CD4-positive, alpha-beta T cell (primary cell): ENCODE measurements at regions of chr4 and their contacts with region 1.

Region 1: DNA sequence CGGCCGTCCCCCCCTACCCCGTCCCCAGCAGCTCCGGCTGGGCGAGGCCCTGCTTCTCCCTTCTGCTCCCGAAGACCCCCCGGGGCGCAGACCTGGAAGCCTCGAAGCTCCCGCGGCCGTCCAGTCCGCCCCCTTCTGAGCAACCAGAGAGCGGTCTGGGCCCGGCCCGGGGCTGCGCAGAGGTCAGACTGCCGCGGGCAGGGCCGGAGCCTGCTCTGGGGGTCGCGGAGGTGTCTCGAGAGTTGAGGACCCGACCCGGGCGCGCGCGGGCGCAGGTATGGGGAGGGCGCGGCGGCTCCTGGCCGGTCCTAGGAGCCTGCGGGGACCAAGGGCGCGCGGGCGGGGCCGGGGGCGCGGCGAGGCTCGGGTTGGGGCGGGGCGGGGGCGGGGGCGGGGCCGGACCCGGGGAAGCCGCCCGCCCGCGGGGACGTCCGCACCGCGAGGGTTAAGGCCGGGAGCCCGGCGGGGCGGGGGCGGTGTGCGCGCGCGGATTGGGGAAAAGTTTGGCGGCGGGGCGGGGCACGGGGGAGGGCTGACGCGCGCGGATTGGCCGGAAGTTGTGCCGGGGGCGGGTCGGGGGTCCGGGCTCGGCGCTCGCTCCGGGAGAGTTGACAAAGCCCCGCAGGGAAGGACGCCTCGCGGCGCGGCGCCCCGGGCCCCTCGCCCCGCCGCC is at the start of gene FGFRL1:
- DNase-seq: peak; percentile 84 to 97 (median 93)
- ATAC-seq: peak; percentile 58
- H3K4me3 ChIP-seq: peak within 1 kb of the TSS; percentile 66
- H3K4me3 Mint-ChIP-seq: peak within 1 kb of the TSS; percentile 91
- H3K27ac ChIP-seq: peak within 1 kb of the TSS; percentile 60 to 62
- H3K27ac Mint-ChIP-seq: peak within 1 kb of the TSS; percentile 97
- H3K4me1 ChIP-seq: peaks cover 31% of the 10 kb centered on the region
- H3K4me1 Mint-ChIP-seq: peaks cover 14% of the 10 kb centered on the region
- H3K27me3 ChIP-seq: peaks cover 13 to 19% of the 10 kb centered on the region in 2 experiments
- H3K27me3 Mint-ChIP-seq: peaks cover 37% of the 10 kb centered on the region
- CTCF ChIP-seq: no peak
- total RNA-seq, gene FGFRL1: 21.8 to 25.0 TPM

Region 2: GRCh38 chr4:781493-782216 is 229.5 kb before region 1 on chr4:
- CTCF ChIA-PET with region 1: interaction called, 3 read pairs
- POLR2A ChIA-PET with region 1: no interaction called
- intact Hi-C with region 1: loop called in 1 of 2 experiments (anchors 1 kb)
- DNase-seq: peak; percentile 96 to 99 (median 98)
- ATAC-seq: peak; percentile 91
- H3K4me3 ChIP-seq: peak overlapping the region; percentile 97
- H3K4me3 Mint-ChIP-seq: peak overlapping the region; percentile 97
- H3K27ac ChIP-seq: peak overlapping the region; percentile 80 to 90
- H3K27ac Mint-ChIP-seq: peak overlapping the region; percentile 95
- H3K4me1 ChIP-seq: peaks cover 65% of the 10 kb centered on the region
- H3K4me1 Mint-ChIP-seq: peaks cover 58% of the 10 kb centered on the region
- H3K27me3 ChIP-seq: peaks cover 16 to 32% of the 10 kb centered on the region in 2 experiments
- H3K27me3 Mint-ChIP-seq: peaks cover 23% of the 10 kb centered on the region
- CTCF ChIP-seq: no peak

Region 3: DNA sequence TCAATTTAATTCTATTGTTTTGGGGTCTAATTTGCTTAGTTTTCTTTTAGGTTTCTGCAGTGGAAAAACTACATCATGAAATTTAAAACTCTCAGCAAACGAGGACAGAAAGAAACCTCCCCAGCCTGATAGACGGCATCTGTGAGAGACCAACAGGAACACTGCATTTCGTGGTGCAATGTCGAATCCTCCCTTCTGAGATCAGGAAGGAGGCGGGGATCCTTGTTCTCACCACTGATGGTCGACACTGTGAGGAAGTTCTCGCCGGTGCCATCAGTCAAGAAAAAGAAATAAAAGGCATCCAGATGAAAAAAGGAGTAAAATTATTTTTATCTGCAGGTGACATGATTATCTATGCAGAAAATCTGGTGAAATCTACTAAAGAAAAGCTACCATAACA is 95.6 kb before region 1 on chr4:
- CTCF ChIA-PET with region 1: no interaction called
- POLR2A ChIA-PET with region 1: no interaction called
- intact Hi-C with region 1: no loop called
- DNase-seq: peak in 5 of 14 experiments; percentile 5 to 38 (median 28)
- ATAC-seq: peak; percentile 74
- H3K4me3 ChIP-seq: no peak overlapping the region
- H3K4me3 Mint-ChIP-seq: peak overlapping the region; percentile 69
- H3K27ac ChIP-seq: no peak overlapping the region
- H3K27ac Mint-ChIP-seq: peak overlapping the region; percentile 10
- H3K4me1 ChIP-seq: peaks cover 27% of the 10 kb centered on the region
- H3K4me1 Mint-ChIP-seq: peaks cover 42% of the 10 kb centered on the region
- H3K27me3 ChIP-seq: no peaks in the 10 kb centered on the region
- H3K27me3 Mint-ChIP-seq: no peaks in the 10 kb centered on the region
- CTCF ChIP-seq: no peak

Region 4: GRCh38 chr4:986879-987623 is 24.1 kb before region 1 on chr4 and contains the start of gene IDUA:
- CTCF ChIA-PET with region 1: interaction called, 3 read pairs
- POLR2A ChIA-PET with region 1: interaction called, 4 read pairs
- intact Hi-C with region 1: loop called in 1 of 2 experiments (anchors 2 kb)
- DNase-seq: peak; percentile 73 to 93 (median 86)
- ATAC-seq: peak; percentile 84
- H3K4me3 ChIP-seq: peak within 1 kb of the TSS; percentile 78
- H3K4me3 Mint-ChIP-seq: peak within 1 kb of the TSS; percentile 94
- H3K27ac ChIP-seq: peak within 1 kb of the TSS; percentile 41 to 46
- H3K27ac Mint-ChIP-seq: peak within 1 kb of the TSS; percentile 82
- H3K4me1 ChIP-seq: peaks cover 36% of the 10 kb centered on the region
- H3K4me1 Mint-ChIP-seq: peaks cover 25% of the 10 kb centered on the region
- H3K27me3 ChIP-seq: no peaks in the 10 kb centered on the region
- H3K27me3 Mint-ChIP-seq: no peaks in the 10 kb centered on the region
- CTCF ChIP-seq: peak; percentile 57
- total RNA-seq, gene IDUA: 70.2 to 77.8 TPM

Region 5: GRCh38 chr4:1033840-1034551 is 22.8 kb after region 1 on chr4:
- CTCF ChIA-PET with region 1: no interaction called
- POLR2A ChIA-PET with region 1: no interaction called
- intact Hi-C with region 1: no loop called
- DNase-seq: no peak
- ATAC-seq: no peak
- H3K4me3 ChIP-seq: no peak overlapping the region
- H3K4me3 Mint-ChIP-seq: no peak overlapping the region
- H3K27ac ChIP-seq: no peak overlapping the region
- H3K27ac Mint-ChIP-seq: no peak overlapping the region
- H3K4me1 ChIP-seq: no peaks in the 10 kb centered on the region
- H3K4me1 Mint-ChIP-seq: no peaks in the 10 kb centered on the region
- H3K27me3 ChIP-seq: peaks cover 4 to 6% of the 10 kb centered on the region in 2 experiments
- H3K27me3 Mint-ChIP-seq: no peaks in the 10 kb centered on the region
- CTCF ChIP-seq: no peak

Region 6: DNA sequence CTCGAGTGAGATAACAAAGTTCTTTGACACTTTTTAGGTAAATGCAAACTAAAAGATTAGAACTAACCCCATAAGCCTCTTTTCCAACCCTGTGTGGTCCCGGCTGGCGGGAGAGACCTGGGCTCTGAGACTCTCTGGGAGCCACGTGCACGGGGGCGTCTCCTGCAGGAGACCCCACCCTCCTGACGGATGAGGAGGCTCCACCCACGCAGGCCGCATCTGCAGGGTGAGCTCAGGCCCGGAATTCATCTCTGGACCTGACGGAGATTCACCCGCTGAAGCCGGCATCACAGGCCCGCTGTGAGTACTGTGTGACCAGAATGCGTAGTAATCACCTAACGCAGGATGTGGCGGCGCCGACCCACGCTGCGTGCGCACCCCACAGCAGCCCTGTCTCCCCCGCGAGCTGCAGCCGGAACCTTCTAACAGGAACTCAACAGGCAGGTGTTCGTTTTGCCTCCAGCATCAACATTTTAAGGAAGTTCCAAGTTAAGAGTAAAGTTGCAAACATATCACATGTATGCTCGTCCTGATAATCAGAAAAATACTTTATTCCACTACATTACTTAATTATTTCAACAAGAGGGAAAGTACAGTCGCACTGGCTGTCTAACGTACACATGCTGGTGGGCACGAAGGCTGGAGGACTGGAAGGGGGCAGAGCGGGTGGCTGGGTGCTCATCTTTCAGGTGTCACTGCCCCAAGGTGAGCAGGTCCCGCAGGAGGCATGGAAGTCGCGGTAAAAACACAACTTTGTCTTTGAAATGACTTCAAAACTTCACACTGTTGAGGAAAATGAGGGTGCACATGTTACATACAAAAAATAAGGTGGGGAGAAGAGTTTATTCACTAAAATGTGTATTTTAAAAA is 44.8 kb after region 1 on chr4:
- CTCF ChIA-PET with region 1: no interaction called
- POLR2A ChIA-PET with region 1: interaction called, 14 read pairs
- intact Hi-C with region 1: loop called (anchors 5 kb)
- DNase-seq: peak; percentile 70 to 95 (median 83)
- ATAC-seq: peak; percentile 97
- H3K4me3 ChIP-seq: peak overlapping the region; percentile 60
- H3K4me3 Mint-ChIP-seq: peak overlapping the region; percentile 44
- H3K27ac ChIP-seq: peak overlapping the region; percentile 8 to 66
- H3K27ac Mint-ChIP-seq: peak overlapping the region; percentile 83
- H3K4me1 ChIP-seq: peaks cover 19% of the 10 kb centered on the region
- H3K4me1 Mint-ChIP-seq: peaks cover 11% of the 10 kb centered on the region
- H3K27me3 ChIP-seq: peaks cover 0 to 4% of the 10 kb centered on the region in 2 experiments
- H3K27me3 Mint-ChIP-seq: no peaks in the 10 kb centered on the region
- CTCF ChIP-seq: no peak

Region 7: DNA sequence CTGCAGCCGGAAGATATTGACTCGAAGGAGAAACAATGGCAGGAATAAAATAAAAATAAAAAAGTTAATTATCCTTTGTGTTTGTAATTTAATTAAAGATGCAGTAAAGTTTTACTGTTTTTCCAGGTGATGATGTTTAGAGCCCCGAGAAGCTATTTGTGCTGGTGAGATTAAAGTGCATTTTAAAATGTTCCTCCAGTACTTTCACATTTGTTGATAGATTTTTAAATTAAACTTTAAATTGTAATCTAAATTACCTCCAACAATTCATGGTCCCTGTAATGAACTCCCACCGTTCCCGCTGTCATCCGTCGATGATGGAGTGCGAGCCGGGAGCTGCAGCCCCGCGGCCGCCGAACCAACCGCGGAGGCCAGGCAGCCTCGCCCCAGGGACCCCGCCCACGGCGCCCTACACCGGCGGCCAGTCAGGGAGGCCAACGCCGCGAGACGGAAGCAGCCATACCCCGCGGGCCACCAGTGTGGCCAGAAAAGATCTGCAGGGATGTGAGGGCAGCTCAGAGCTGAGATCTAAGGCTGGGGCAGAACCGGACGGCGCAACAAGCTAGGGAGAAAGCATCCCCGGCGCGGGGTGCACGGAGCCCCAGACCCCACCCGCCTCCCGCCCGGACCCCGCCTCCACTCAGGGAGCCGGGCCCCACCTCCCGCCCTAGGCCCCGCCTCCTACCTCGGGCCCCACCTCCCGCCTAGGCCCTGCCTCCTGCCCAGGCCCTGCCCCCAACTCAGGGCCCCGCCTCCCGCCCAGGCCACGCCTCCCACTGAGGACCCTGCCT is 568.9 kb after region 1 on chr4:
- CTCF ChIA-PET with region 1: no interaction called
- POLR2A ChIA-PET with region 1: interaction called, 3 read pairs
- intact Hi-C with region 1: loop called in 1 of 2 experiments (anchors 2 kb)
- DNase-seq: peak; percentile 88 to 97 (median 93)
- ATAC-seq: peak; percentile 82
- H3K4me3 ChIP-seq: peak overlapping the region; percentile 73
- H3K4me3 Mint-ChIP-seq: peak overlapping the region; percentile 86
- H3K27ac ChIP-seq: peak overlapping the region in 1 of 2 donors; percentile 65
- H3K27ac Mint-ChIP-seq: peak overlapping the region; percentile 63
- H3K4me1 ChIP-seq: peaks cover 14% of the 10 kb centered on the region
- H3K4me1 Mint-ChIP-seq: no peaks in the 10 kb centered on the region
- H3K27me3 ChIP-seq: no peaks in the 10 kb centered on the region
- H3K27me3 Mint-ChIP-seq: no peaks in the 10 kb centered on the region
- CTCF ChIP-seq: no peak